A673 (cell line): ENCODE measurements at regions of chr11 and their contacts with region 1.

Region 1: GRCh38 chr11:57885298-57886050 is 123.9 kb downstream of the CTNND1 start:
- DNase-seq: peak; percentile 48
- H3K4me3 ChIP-seq: no peak overlapping the region
- H3K27ac ChIP-seq: no peak overlapping the region
- H3K4me1 ChIP-seq: no peaks in the 10 kb centered on the region
- H3K27me3 ChIP-seq: peaks cover 3% of the 10 kb centered on the region
- CTCF ChIP-seq: no peak

Region 2: DNA sequence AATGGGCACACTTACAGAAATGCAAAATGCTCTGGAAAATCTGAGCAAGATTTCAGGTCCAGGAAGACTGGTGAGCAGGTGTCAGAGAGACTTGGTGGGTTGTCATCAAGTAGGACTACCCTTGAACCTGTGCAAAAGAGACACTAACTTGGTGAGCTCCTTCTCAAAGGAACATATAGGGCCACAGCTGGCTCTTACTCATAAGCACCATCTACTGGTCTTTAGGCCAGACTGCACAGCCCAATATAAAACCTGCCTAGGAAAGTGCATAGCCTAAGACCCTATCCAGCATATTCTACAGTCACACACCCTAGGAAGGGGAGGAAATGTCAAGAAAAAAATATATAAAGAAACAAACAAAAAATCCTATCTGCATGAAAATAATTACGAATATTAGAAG is 400.8 kb after region 1 on chr11:
- CTCF ChIA-PET with region 1: interaction called, 14 read pairs
- POLR2A ChIA-PET with region 1: no interaction called
- intact Hi-C with region 1: no loop called
- DNase-seq: peak; percentile 54
- H3K4me3 ChIP-seq: no peak overlapping the region
- H3K27ac ChIP-seq: no peak overlapping the region
- H3K4me1 ChIP-seq: no peaks in the 10 kb centered on the region
- H3K27me3 ChIP-seq: no peaks in the 10 kb centered on the region
- CTCF ChIP-seq: peak; percentile 82